ENCODE measurements at regions of chr4 and their contacts with region 1.

Region 1: GRCh38 chr4:117324851-117325491 is 239.6 kb upstream of the TRAM1L1 start:
- DNase-seq: no peak

Region 2: GRCh38 chr4:116913451-116913850 is 411.5 kb before region 1 on chr4:
- intact Hi-C with region 1: loop called in 1 of 2 experiments (anchors 5 kb)
- DNase-seq: no peak

Region 3: DNA sequence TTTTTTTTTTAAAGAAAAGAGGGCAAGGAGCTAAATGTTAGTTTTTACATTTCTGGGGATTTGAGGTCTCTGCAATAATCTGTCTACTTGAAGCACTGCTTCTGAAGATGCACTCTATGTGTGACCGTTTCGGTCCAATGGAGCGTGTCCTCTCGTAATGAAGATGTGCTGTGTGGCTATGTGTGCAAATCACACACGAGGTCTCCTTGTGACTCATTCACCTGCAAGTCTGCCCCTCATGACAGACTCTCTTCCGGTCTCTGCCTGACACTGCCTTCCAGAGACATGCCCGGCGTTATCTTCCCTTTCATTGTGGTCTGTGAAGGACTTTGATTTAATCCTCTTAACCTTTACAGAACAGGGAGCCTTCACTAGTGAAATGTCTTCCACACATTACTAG is 323.9 kb before region 1 on chr4:
- intact Hi-C with region 1: no loop called
- DNase-seq: no peak

Region 4: DNA sequence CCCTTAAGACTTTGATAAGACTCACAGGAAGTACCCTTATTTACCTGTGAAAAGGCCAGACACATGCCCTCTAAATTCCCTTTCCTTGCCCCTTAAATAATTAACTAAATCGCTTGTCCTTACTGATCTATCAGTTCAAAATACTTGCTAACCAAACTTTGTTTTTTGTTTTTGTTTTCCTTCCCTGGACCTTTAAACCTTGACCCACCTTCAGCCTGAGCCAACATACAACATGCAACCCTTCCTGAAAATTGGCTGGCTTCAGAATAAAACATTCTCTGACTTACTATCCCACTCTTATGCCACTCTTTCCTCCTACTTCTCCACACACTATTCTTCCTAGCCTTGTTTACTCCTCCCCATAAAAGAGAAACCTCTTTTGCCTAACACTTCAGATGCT is 208.5 kb after region 1 on chr4:
- intact Hi-C with region 1: no loop called
- DNase-seq: no peak

Measured in posterior vena cava (tissue), 2 donors.